Activated CD8-positive, alpha-beta T cell treated with anti-CD3 and anti-CD28 coated beads for 36 hours (primary cell): ENCODE measurements at regions of chr5 and their contacts with region 1.

Region 1: DNA sequence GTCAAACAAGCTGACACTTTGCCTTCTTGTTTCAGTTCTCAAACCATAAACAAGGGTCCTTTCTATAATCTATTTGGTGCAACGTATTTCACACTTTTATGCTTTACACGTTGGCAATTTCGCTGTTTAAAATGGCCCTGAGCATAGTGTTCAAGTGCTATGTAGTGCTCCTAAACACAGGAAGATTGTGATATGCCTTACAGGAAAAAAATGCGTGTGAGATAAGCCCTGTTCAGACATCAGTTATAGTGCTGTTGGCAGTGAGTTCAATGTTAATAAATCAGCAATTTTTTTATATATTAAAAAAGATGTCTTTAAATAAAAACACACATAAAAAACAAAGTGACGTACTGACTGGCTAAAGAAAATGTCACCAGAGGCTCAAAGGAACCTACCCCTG is 23.9 kb downstream of the CLINT1 start:
- DNase-seq: no peak
- ATAC-seq: no peak
- H3K4me3 Mint-ChIP-seq: no peak overlapping the region
- H3K27ac Mint-ChIP-seq: no peak overlapping the region
- H3K4me1 Mint-ChIP-seq: peaks cover 25% of the 10 kb centered on the region
- H3K27me3 Mint-ChIP-seq: no peaks in the 10 kb centered on the region
- CTCF ChIP-seq: no peak

Region 2: DNA sequence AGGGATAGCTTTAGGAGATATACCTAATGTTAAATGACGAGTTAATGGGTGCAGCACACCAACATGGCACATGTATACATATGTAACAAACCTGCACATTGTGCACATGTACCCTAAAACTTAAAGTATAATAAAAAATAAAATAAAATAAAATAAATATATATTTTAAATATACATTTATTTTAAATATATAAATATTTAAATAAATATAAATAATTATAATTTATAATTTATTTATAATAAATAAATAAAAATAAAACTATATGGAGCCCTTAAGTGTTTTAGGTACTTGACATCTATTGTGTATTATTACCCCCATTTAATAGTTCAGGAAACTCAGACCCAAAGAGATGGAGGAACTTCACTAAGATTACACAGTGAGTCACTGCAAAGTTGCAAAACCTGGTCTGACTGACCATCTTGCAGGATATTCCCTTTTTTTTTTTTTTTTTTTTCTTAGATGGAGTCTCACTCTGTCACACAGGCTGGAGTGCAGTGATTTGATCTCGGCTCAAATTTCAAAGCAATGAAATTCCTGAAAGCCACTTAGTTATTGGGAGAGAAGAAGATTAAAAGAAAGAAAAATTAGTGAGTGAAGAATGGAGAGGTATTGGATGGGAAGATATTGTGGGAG is 169.5 kb before region 1 on chr5:
- CTCF ChIA-PET with region 1: no interaction called
- POLR2A ChIA-PET with region 1: no interaction called
- intact Hi-C with region 1: no loop called
- DNase-seq: no peak
- ATAC-seq: no peak
- H3K4me3 Mint-ChIP-seq: no peak overlapping the region
- H3K27ac Mint-ChIP-seq: no peak overlapping the region
- H3K4me1 Mint-ChIP-seq: peaks cover 8% of the 10 kb centered on the region
- H3K27me3 Mint-ChIP-seq: peaks cover 15% of the 10 kb centered on the region
- CTCF ChIP-seq: no peak

Region 3: GRCh38 chr5:157845894-157846598 is 11.0 kb after region 1 on chr5:
- CTCF ChIA-PET with region 1: interaction called, 11 read pairs
- POLR2A ChIA-PET with region 1: interaction called, 3 read pairs
- intact Hi-C with region 1: no loop called
- DNase-seq: no peak
- ATAC-seq: no peak
- H3K4me3 Mint-ChIP-seq: no peak overlapping the region
- H3K27ac Mint-ChIP-seq: no peak overlapping the region
- H3K4me1 Mint-ChIP-seq: peaks cover 27% of the 10 kb centered on the region
- H3K27me3 Mint-ChIP-seq: no peaks in the 10 kb centered on the region
- CTCF ChIP-seq: no peak

Region 4: GRCh38 chr5:157908459-157908858 is 73.4 kb after region 1 on chr5:
- CTCF ChIA-PET with region 1: no interaction called
- POLR2A ChIA-PET with region 1: no interaction called
- intact Hi-C with region 1: no loop called
- DNase-seq: no peak
- ATAC-seq: no peak
- H3K4me3 Mint-ChIP-seq: no peak overlapping the region
- H3K27ac Mint-ChIP-seq: no peak overlapping the region
- H3K4me1 Mint-ChIP-seq: no peaks in the 10 kb centered on the region
- H3K27me3 Mint-ChIP-seq: no peaks in the 10 kb centered on the region
- CTCF ChIP-seq: no peak

Region 5: GRCh38 chr5:157956271-157956885 is 121.3 kb after region 1 on chr5:
- CTCF ChIA-PET with region 1: no interaction called
- POLR2A ChIA-PET with region 1: no interaction called
- intact Hi-C with region 1: no loop called
- DNase-seq: no peak
- ATAC-seq: no peak
- H3K4me3 Mint-ChIP-seq: no peak overlapping the region
- H3K27ac Mint-ChIP-seq: no peak overlapping the region
- H3K4me1 Mint-ChIP-seq: no peaks in the 10 kb centered on the region
- H3K27me3 Mint-ChIP-seq: peaks cover 4% of the 10 kb centered on the region
- CTCF ChIP-seq: no peak